Mammary epithelial cell (primary cell): ENCODE measurements at regions of chr3 and their contacts with region 1.

Region 1: GRCh38 chr3:50154840-50155474 is at the start of gene SEMA3F:
- DNase-seq: peak; percentile 81
- H3K4me3 ChIP-seq: peak within 1 kb of the TSS; percentile 69 to 84 (median 71)
- H3K27ac ChIP-seq: peak within 1 kb of the TSS; percentile 67
- H3K4me1 ChIP-seq: peaks cover 70% of the 10 kb centered on the region
- H3K27me3 ChIP-seq: no peaks in the 10 kb centered on the region
- CTCF ChIP-seq: no peak
- total RNA-seq, gene SEMA3F: 102 to 129 TPM

Region 2: GRCh38 chr3:50121416-50122032 is 33.4 kb before region 1 on chr3:
- CTCF ChIA-PET with region 1: no interaction called
- dilution Hi-C with region 1: no loop called
- in situ Hi-C with region 1: no loop called
- intact Hi-C with region 1: loop called (anchors 1 kb)
- DNase-seq: peak; percentile 60
- H3K4me3 ChIP-seq: no peak overlapping the region
- H3K27ac ChIP-seq: no peak overlapping the region
- H3K4me1 ChIP-seq: peaks cover 13% of the 10 kb centered on the region
- H3K27me3 ChIP-seq: no peaks in the 10 kb centered on the region
- CTCF ChIP-seq: peak; percentile 74 to 84

Region 3: GRCh38 chr3:50454481-50455070 is 299.6 kb after region 1 on chr3:
- CTCF ChIA-PET with region 1: no interaction called
- dilution Hi-C with region 1: no loop called
- in situ Hi-C with region 1: no loop called
- intact Hi-C with region 1: no loop called
- DNase-seq: no peak
- H3K4me3 ChIP-seq: no peak overlapping the region
- H3K27ac ChIP-seq: no peak overlapping the region
- H3K4me1 ChIP-seq: no peaks in the 10 kb centered on the region
- H3K27me3 ChIP-seq: no peaks in the 10 kb centered on the region
- CTCF ChIP-seq: no peak